ENCODE measurements at regions of chr5 and their contacts with region 1.

Region 1: GRCh38 chr5:93117751-93118531 is 463.1 kb downstream of the NR2F1-AS1 start:
- DNase-seq: no peak
- H3K4me3 ChIP-seq: no peak overlapping the region
- CTCF ChIP-seq: no peak

Region 2: GRCh38 chr5:93208141-93208751 is 90.3 kb after region 1 on chr5:
- in situ Hi-C with region 1: loop called (anchors 5 kb)
- DNase-seq: no peak
- H3K4me3 ChIP-seq: no peak overlapping the region
- CTCF ChIP-seq: no peak